HCT116 (cell line): ENCODE measurements at regions of chr10 and their contacts with region 1.

Region 1: GRCh38 chr10:80382989-80383388 is 25.4 kb upstream of the PRXL2A start:
- DNase-seq: peak; percentile 49
- ATAC-seq: peak; percentile 57
- H3K4me3 ChIP-seq: peak overlapping the region; percentile 13 to 23; a peak in 3 of 4 replicates
- H3K27ac ChIP-seq: no peak overlapping the region
- H3K4me1 ChIP-seq: peaks cover 0 to 13% of the 10 kb centered on the region in 2 experiments; a peak in 3 of 4 replicates
- H3K27me3 ChIP-seq: no peaks in the 10 kb centered on the region
- CTCF ChIP-seq: peak; percentile 66 to 88 (median 78)
- POLR2A ChIP-seq: no peak
- RAD21 ChIP-seq: peak; percentile 89

Region 2: GRCh38 chr10:80530251-80530650 is 147.3 kb after region 1 on chr10:
- CTCF ChIA-PET with region 1: interaction called, 3 read pairs
- POLR2A ChIA-PET with region 1: no interaction called
- RAD21 ChIA-PET with region 1: no interaction called
- intact Hi-C with region 1: loop called (anchors 2 kb)
- DNase-seq: peak; percentile 27
- ATAC-seq: peak; percentile 91
- H3K4me3 ChIP-seq: no peak overlapping the region
- H3K27ac ChIP-seq: no peak overlapping the region
- H3K4me1 ChIP-seq: peaks cover 0 to 4% of the 10 kb centered on the region in 2 experiments; a peak in 1 of 4 replicates
- H3K27me3 ChIP-seq: no peaks in the 10 kb centered on the region
- CTCF ChIP-seq: peak; percentile 46 to 68 (median 50); a peak in 5 of 6 replicates
- POLR2A ChIP-seq: no peak
- RAD21 ChIP-seq: peak; percentile 80

Region 3: GRCh38 chr10:80662577-80663261 is 279.7 kb after region 1 on chr10:
- CTCF ChIA-PET with region 1: interaction called, 12 read pairs
- POLR2A ChIA-PET with region 1: no interaction called
- RAD21 ChIA-PET with region 1: no interaction called
- intact Hi-C with region 1: loop called (anchors 5 kb)
- DNase-seq: peak; percentile 61
- ATAC-seq: peak; percentile 87
- H3K4me3 ChIP-seq: peak overlapping the region; percentile 38 to 39
- H3K27ac ChIP-seq: no peak overlapping the region
- H3K4me1 ChIP-seq: peaks cover 3 to 13% of the 10 kb centered on the region in 2 experiments; a peak in 2 of 4 replicates
- H3K27me3 ChIP-seq: no peaks in the 10 kb centered on the region
- CTCF ChIP-seq: peak; percentile 75 to 88 (median 83)
- POLR2A ChIP-seq: no peak
- RAD21 ChIP-seq: peak; percentile 73

Region 4: DNA sequence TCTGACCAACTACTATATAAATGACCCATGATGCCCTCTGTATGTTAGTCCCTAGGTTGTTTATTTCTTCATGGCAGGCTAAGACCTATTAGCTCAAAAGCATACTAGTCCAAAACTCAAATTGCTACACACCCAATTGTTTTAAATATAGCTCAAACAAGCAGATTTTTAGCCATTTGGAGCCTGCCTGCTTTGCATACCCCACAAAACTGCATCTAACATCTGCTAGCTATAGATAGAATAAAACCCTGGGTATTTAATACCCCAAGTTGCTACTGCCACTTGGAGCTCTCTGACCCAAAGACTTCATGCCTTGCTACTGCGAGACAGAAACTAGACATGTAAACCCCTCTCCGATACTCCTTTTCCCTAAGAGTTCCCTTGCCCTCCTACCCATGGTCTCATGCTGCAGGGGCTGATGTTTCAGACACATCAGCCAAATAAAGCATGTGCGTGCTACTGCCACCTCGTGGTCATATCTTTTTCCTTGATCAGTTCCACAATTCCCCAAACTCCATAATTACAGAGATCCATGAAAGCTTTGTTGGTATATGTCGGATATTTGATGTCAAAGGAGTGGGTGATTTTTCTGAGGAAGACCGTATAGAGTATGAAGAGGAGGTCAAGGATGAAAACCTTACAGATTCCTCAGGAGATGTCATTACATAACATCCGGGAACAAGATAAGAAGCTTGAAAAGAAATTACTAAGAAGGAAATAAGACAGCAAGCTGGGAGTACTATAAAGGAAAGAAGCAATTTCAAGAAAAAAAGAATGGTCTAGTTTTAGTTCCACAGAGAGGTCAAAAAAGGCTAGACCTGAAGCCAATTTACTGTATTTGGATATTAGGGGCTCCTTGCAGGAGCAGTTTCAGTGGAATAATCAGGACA is 541.3 kb after region 1 on chr10:
- CTCF ChIA-PET with region 1: interaction called, 6 read pairs
- POLR2A ChIA-PET with region 1: no interaction called
- RAD21 ChIA-PET with region 1: no interaction called
- intact Hi-C with region 1: loop called (anchors 2 kb)
- DNase-seq: peak; percentile 21
- ATAC-seq: peak; percentile 78
- H3K4me3 ChIP-seq: no peak overlapping the region
- H3K27ac ChIP-seq: no peak overlapping the region
- H3K4me1 ChIP-seq: no peaks in the 10 kb centered on the region
- H3K27me3 ChIP-seq: no peaks in the 10 kb centered on the region
- CTCF ChIP-seq: peak; percentile 49 to 78 (median 60); a peak in 5 of 6 replicates
- POLR2A ChIP-seq: no peak
- RAD21 ChIP-seq: peak; percentile 49